Naive thymus-derived CD4-positive, alpha-beta T cell (primary cell): ENCODE measurements at regions of chr15 and their contacts with region 1.

Region 1: GRCh38 chr15:64596701-64597476 is 136.5 kb downstream of the ZNF609 start:
- DNase-seq: peak in 6 of 9 donors; percentile 51 to 68 (median 62)
- ATAC-seq: peak; percentile 81
- H3K4me3 ChIP-seq: peak overlapping the region; percentile 47
- H3K4me3 Mint-ChIP-seq: peak overlapping the region; percentile 77 to 92 (median 87)
- H3K27ac ChIP-seq: peak overlapping the region; percentile 73
- H3K27ac Mint-ChIP-seq: peak overlapping the region; percentile 89 to 99 (median 94)
- H3K4me1 ChIP-seq: peaks cover 6 to 41% of the 10 kb centered on the region in 2 donors
- H3K4me1 Mint-ChIP-seq: peaks cover 41 to 84% (median 69%) of the 10 kb centered on the region in 7 donors
- H3K27me3 ChIP-seq: no peaks in the 10 kb centered on the region
- H3K27me3 Mint-ChIP-seq: no peaks in the 10 kb centered on the region

Region 2: GRCh38 chr15:64536244-64536836 is 60.5 kb before region 1 on chr15:
- CTCF ChIA-PET with region 1: no interaction called
- POLR2A ChIA-PET with region 1: no interaction called
- intact Hi-C with region 1: no loop called
- DNase-seq: no peak
- ATAC-seq: no peak
- H3K4me3 ChIP-seq: no peak overlapping the region
- H3K4me3 Mint-ChIP-seq: peak overlapping the region in 7 of 10 donors; percentile 5 to 55 (median 30)
- H3K27ac ChIP-seq: peak overlapping the region; percentile 14
- H3K27ac Mint-ChIP-seq: peak overlapping the region in 6 of 9 donors; percentile 18 to 70 (median 33)
- H3K4me1 ChIP-seq: peaks cover 6 to 32% of the 10 kb centered on the region in 2 donors
- H3K4me1 Mint-ChIP-seq: peaks cover 35 to 55% (median 48%) of the 10 kb centered on the region in 7 donors
- H3K27me3 ChIP-seq: no peaks in the 10 kb centered on the region
- H3K27me3 Mint-ChIP-seq: no peaks in the 10 kb centered on the region

Region 3: GRCh38 chr15:64582202-64582601 is 14.7 kb before region 1 on chr15:
- CTCF ChIA-PET with region 1: interaction called, 5 read pairs
- POLR2A ChIA-PET with region 1: interaction called, 25 read pairs
- intact Hi-C with region 1: loop called in 1 of 2 experiments (anchors 1 kb)
- DNase-seq: no peak
- ATAC-seq: peak; percentile 41
- H3K4me3 ChIP-seq: no peak overlapping the region
- H3K4me3 Mint-ChIP-seq: peak overlapping the region in 8 of 10 donors; percentile 2 to 86 (median 28)
- H3K27ac ChIP-seq: no peak overlapping the region
- H3K27ac Mint-ChIP-seq: peak overlapping the region in 8 of 9 donors; percentile 4 to 93 (median 68)
- H3K4me1 ChIP-seq: peaks cover 0 to 28% of the 10 kb centered on the region in 2 donors
- H3K4me1 Mint-ChIP-seq: peaks cover 35 to 75% (median 65%) of the 10 kb centered on the region in 7 donors
- H3K27me3 ChIP-seq: no peaks in the 10 kb centered on the region
- H3K27me3 Mint-ChIP-seq: no peaks in the 10 kb centered on the region

Region 4: DNA sequence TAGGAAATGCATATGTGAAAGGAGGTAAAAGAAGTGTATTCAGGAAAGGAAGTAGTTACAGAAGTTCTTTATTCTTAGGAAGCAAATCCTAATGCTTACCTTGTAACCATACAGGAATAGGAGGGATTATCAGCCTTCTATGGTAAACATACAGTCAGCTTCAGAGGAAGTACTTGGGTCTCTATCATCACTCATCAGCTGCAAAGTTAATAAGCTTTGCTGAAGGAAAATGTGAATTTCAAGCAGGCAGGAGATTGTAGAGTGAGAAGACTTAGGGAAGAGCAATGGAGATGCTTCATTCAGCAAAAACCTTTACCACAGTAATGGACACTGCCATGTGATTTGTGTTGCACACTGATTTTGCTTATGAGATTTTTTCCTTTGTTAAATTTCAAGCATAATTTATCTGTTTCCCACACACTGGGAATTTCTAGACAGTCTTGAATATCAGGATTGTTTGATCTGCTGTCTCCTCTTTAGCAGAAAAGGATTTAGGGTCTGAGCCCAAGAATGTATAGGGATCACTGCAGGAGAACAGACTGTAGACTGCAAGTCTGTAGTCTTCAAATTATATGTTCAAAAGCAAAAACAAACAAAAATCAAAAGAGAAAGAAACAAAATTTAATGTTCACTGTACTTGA is 14.3 kb after region 1 on chr15:
- CTCF ChIA-PET with region 1: no interaction called
- POLR2A ChIA-PET with region 1: interaction called, 6 read pairs
- intact Hi-C with region 1: loop called in 1 of 2 experiments (anchors 2 kb)
- DNase-seq: no peak
- ATAC-seq: no peak
- H3K4me3 ChIP-seq: no peak overlapping the region
- H3K4me3 Mint-ChIP-seq: peak overlapping the region in 8 of 10 donors; percentile 1 to 60 (median 41)
- H3K27ac ChIP-seq: no peak overlapping the region
- H3K27ac Mint-ChIP-seq: peak overlapping the region in 8 of 9 donors; percentile 48 to 92 (median 68)
- H3K4me1 ChIP-seq: peaks cover 0 to 23% of the 10 kb centered on the region in 2 donors
- H3K4me1 Mint-ChIP-seq: peaks cover 33 to 64% (median 42%) of the 10 kb centered on the region in 7 donors
- H3K27me3 ChIP-seq: no peaks in the 10 kb centered on the region
- H3K27me3 Mint-ChIP-seq: no peaks in the 10 kb centered on the region

Region 5: GRCh38 chr15:64634576-64635498 is 37.9 kb after region 1 on chr15:
- CTCF ChIA-PET with region 1: no interaction called
- POLR2A ChIA-PET with region 1: no interaction called
- intact Hi-C with region 1: loop called (anchors 5 kb)
- DNase-seq: peak in 1 of 9 donors; percentile 13
- ATAC-seq: peak; percentile 55
- H3K4me3 ChIP-seq: peak overlapping the region; percentile 5
- H3K4me3 Mint-ChIP-seq: peak overlapping the region; percentile 51 to 74 (median 68)
- H3K27ac ChIP-seq: peak overlapping the region; percentile 47
- H3K27ac Mint-ChIP-seq: peak overlapping the region; percentile 37 to 87 (median 82)
- H3K4me1 ChIP-seq: peaks cover 50 to 53% of the 10 kb centered on the region in 2 donors
- H3K4me1 Mint-ChIP-seq: peaks cover 51 to 86% (median 72%) of the 10 kb centered on the region in 7 donors
- H3K27me3 ChIP-seq: no peaks in the 10 kb centered on the region
- H3K27me3 Mint-ChIP-seq: no peaks in the 10 kb centered on the region

Region 6: DNA sequence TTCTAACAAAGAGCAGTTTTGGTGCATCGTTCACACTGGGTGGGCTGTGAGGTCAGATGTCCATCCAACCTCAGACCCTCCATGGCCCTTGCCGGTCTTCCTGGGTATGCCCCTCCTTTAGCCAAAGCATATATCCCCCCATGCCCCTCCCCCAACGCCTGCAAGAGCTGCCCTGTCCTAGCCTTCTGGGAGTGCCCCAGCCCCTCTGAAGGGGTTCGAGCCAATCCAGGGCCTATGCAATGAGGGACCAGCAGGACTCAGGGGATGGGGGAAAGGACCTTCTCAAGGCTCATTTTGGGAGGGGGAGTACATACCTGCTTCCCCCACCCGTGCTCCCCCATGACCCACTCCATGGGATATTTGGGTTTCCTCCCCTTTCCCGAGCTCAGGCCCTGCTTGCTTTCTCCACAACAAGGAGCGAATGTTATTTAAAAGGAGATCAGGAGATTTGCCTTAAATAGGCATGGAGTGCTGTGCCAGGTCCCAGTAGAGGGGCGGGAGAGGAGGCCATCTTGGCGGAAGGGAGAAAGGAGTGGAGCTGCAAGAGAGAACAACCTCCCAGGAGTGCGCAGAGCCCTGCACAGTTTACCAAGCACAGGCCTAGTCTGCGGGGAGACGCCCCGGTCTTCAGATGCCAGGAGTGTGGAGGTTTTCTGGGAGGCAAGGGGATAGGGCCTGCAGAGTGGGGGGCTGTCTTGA is 210.3 kb after region 1 on chr15:
- CTCF ChIA-PET with region 1: no interaction called
- POLR2A ChIA-PET with region 1: no interaction called
- intact Hi-C with region 1: no loop called
- DNase-seq: no peak
- ATAC-seq: no peak
- H3K4me3 ChIP-seq: no peak overlapping the region
- H3K4me3 Mint-ChIP-seq: no peak overlapping the region
- H3K27ac ChIP-seq: no peak overlapping the region
- H3K27ac Mint-ChIP-seq: no peak overlapping the region
- H3K4me1 ChIP-seq: peaks cover 0 to 3% of the 10 kb centered on the region in 2 donors
- H3K4me1 Mint-ChIP-seq: peaks cover 0 to 5% (median 4%) of the 10 kb centered on the region in 7 donors
- H3K27me3 ChIP-seq: no peaks in the 10 kb centered on the region
- H3K27me3 Mint-ChIP-seq: peaks cover 0 to 15% (median 0%) of the 10 kb centered on the region in 5 donors

Region 7: DNA sequence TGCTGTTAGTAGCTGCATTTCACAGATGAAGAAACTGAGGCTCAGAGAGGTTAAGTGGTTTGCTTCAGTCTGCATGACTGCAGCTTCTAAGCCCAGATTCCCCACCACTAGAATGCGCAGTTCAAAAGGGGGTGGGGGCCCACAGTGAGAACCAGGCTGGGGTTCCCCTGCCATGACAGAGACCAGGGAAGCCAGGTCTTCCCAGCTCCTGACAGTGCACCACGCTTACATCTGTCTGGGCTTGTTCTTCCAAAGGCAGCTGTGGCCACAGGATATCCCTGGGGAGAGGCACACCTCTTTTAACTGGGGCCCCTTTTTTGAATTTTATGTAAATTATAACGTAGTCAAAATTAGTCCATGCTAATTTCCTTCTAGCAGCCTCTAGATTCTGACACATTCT is 250.1 kb after region 1 on chr15:
- CTCF ChIA-PET with region 1: no interaction called
- POLR2A ChIA-PET with region 1: no interaction called
- intact Hi-C with region 1: no loop called
- DNase-seq: no peak
- ATAC-seq: no peak
- H3K4me3 ChIP-seq: no peak overlapping the region
- H3K4me3 Mint-ChIP-seq: peak overlapping the region in 1 of 10 donors; percentile 14
- H3K27ac ChIP-seq: no peak overlapping the region
- H3K27ac Mint-ChIP-seq: peak overlapping the region in 7 of 9 donors; percentile 21 to 91 (median 33)
- H3K4me1 ChIP-seq: peaks cover 30 to 34% of the 10 kb centered on the region in 2 donors
- H3K4me1 Mint-ChIP-seq: peaks cover 48 to 82% (median 64%) of the 10 kb centered on the region in 7 donors
- H3K27me3 ChIP-seq: no peaks in the 10 kb centered on the region
- H3K27me3 Mint-ChIP-seq: no peaks in the 10 kb centered on the region